ENCODE measurements at regions of chr1 and their contacts with region 1.

Region 1: GRCh38 chr1:156160743-156161171 is 7.4 kb downstream of the SEMA4A start:
- DNase-seq: no peak
- ATAC-seq: peak; percentile 48
- H3K4me3 ChIP-seq: no peak overlapping the region
- H3K27ac ChIP-seq: no peak overlapping the region; the same call in 1 of the 2 replicates
- H3K4me1 ChIP-seq: peaks cover 48% of the 10 kb centered on the region
- H3K27me3 ChIP-seq: no peaks in the 10 kb centered on the region
- CTCF ChIP-seq: no peak
- EP300 ChIP-seq: no peak
- POLR2A ChIP-seq: no peak
- RAD21 ChIP-seq: no peak

Region 2: GRCh38 chr1:155729031-155729898 is 431.5 kb before region 1 on chr1:
- CTCF ChIA-PET with region 1: no interaction called
- POLR2A ChIA-PET with region 1: no interaction called
- RAD21 ChIA-PET with region 1: no interaction called
- SMC1A ChIA-PET with region 1: no interaction called
- in situ Hi-C with region 1: no loop called
- intact Hi-C with region 1: no loop called
- DNase-seq: no peak
- ATAC-seq: peak; percentile 73
- H3K4me3 ChIP-seq: no peak overlapping the region
- H3K27ac ChIP-seq: no peak overlapping the region
- H3K4me1 ChIP-seq: no peaks in the 10 kb centered on the region
- H3K27me3 ChIP-seq: no peaks in the 10 kb centered on the region
- CTCF ChIP-seq: peak; percentile 51 to 68 (median 60)
- EP300 ChIP-seq: no peak
- POLR2A ChIP-seq: no peak
- RAD21 ChIP-seq: peak; percentile 67

Region 3: GRCh38 chr1:156025877-156026276 is 134.9 kb before region 1 on chr1:
- CTCF ChIA-PET with region 1: no interaction called
- POLR2A ChIA-PET with region 1: no interaction called
- RAD21 ChIA-PET with region 1: no interaction called
- SMC1A ChIA-PET with region 1: no interaction called
- in situ Hi-C with region 1: no loop called
- intact Hi-C with region 1: no loop called
- DNase-seq: no peak
- ATAC-seq: peak; percentile 95
- H3K4me3 ChIP-seq: no peak overlapping the region
- H3K27ac ChIP-seq: no peak overlapping the region
- H3K4me1 ChIP-seq: no peaks in the 10 kb centered on the region
- H3K27me3 ChIP-seq: no peaks in the 10 kb centered on the region; a peak in 1 of 4 replicates
- CTCF ChIP-seq: peak; percentile 37 to 73 (median 62)
- EP300 ChIP-seq: no peak
- POLR2A ChIP-seq: no peak
- RAD21 ChIP-seq: peak; percentile 42; the same call in 1 of the 2 replicates

Region 4: GRCh38 chr1:156106624-156107488 is 53.9 kb before region 1 on chr1:
- CTCF ChIA-PET with region 1: no interaction called
- POLR2A ChIA-PET with region 1: no interaction called
- RAD21 ChIA-PET with region 1: no interaction called
- SMC1A ChIA-PET with region 1: no interaction called
- in situ Hi-C with region 1: no loop called
- intact Hi-C with region 1: no loop called
- DNase-seq: no peak
- ATAC-seq: peak; percentile 38
- H3K4me3 ChIP-seq: peak overlapping the region; percentile 45; the same call in 1 of the 2 replicates
- H3K27ac ChIP-seq: peak overlapping the region; percentile 57
- H3K4me1 ChIP-seq: peaks cover 30% of the 10 kb centered on the region
- H3K27me3 ChIP-seq: no peaks in the 10 kb centered on the region
- CTCF ChIP-seq: no peak
- EP300 ChIP-seq: no peak
- POLR2A ChIP-seq: no peak
- RAD21 ChIP-seq: no peak

Region 5: DNA sequence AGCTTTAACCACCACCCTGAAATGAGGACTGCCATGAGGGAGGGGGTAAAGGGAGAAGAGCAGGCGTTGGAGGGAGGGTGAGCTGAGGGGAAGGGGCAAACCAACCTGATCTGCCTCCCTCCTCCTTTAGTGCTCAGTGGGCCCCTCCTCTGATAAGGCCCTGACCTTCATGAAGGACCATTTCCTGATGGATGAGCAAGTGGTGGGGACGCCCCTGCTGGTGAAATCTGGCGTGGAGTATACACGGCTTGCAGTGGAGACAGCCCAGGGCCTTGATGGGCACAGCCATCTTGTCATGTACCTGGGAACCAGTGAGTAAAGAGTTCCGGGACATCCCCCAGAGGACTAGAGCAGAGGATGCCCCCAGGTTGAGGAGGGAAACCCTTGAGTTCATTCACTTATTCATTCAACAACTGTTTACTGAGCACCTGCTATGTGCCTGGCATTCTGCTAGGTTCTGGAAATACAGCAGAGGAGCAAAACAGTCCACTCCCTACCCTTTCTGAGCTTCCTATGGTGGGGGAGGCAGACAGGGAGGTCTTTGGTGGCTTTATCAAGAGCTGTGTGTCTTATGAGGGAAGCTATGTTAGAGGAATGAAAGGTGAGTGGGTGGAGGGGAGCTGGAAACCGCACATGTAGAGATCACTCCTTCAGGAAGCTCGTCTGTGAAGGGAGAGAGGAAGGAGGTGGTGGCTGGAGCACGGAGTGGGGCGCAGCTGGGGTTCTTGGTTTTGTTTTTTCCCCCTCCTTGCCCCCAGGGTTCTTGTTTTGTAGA is 12.1 kb after region 1 on chr1:
- CTCF ChIA-PET with region 1: no interaction called
- POLR2A ChIA-PET with region 1: interaction called, 11 read pairs
- RAD21 ChIA-PET with region 1: interaction called, 3 read pairs
- SMC1A ChIA-PET with region 1: interaction called, 4 read pairs
- in situ Hi-C with region 1: no loop called
- intact Hi-C with region 1: no loop called
- DNase-seq: no peak
- ATAC-seq: no peak
- H3K4me3 ChIP-seq: no peak overlapping the region
- H3K27ac ChIP-seq: no peak overlapping the region
- H3K4me1 ChIP-seq: no peaks in the 10 kb centered on the region; the same call in 1 of the 2 replicates
- H3K27me3 ChIP-seq: no peaks in the 10 kb centered on the region
- CTCF ChIP-seq: no peak
- EP300 ChIP-seq: no peak
- POLR2A ChIP-seq: no peak
- RAD21 ChIP-seq: no peak

Measured in GM12878 (cell line).